Naive thymus-derived CD8-positive, alpha-beta T cell (primary cell): ENCODE measurements at regions of chr9 and their contacts with region 1.

Region 1: GRCh38 chr9:137578518-137579258 is at the start of gene DPH7:
- DNase-seq: peak; percentile 85 to 99 (median 92)
- ATAC-seq: peak; percentile 98 to 99
- H3K4me3 Mint-ChIP-seq: peak within 1 kb of the TSS; percentile 72 to 88 (median 82)
- H3K27ac Mint-ChIP-seq: peak within 1 kb of the TSS in 9 of 10 donors; percentile 13 to 87 (median 80)
- H3K4me1 Mint-ChIP-seq: peaks cover 20 to 39% (median 33%) of the 10 kb centered on the region in 4 donors
- H3K27me3 Mint-ChIP-seq: no peaks in the 10 kb centered on the region
- polyA plus RNA-seq, gene DPH7: 26.2 to 32.8 (median 29.8) TPM

Region 2: DNA sequence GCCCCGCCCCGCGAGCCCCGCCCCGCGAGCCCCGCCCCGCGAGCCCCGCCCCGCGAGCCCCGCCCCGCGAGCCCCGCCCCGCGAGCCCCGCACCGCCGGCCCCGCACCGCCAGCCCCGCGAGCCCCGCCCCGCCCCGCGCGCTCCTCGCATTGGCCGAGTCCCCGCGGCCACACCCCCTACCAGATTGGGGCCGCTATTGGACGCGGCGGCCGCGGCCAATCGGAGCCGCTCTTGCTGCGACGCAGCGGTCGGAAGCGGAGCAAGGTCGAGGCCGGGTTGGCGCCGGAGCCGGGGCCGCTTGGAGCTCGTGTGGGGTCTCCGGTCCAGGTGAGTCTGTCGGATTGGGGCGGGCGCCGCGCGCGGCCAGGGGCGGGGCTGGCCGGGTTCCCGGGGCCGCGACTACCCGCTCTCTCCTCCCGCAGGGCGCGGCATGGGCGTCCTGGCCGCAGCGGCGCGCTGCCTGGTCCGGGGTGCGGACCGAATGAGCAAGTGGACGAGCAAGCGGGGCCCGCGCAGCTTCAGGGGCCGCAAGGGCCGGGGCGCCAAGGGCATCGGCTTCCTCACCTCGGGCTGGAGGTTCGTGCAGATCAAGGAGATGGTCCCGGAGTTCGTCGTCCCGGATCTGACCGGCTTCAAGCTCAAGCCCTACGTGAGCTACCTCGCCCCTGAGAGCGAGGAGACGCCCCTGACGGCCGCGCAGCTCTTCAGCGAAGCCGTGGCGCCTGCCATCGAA is 26.9 kb before region 1 on chr9 and contains the start of gene MRPL41:
- POLR2A ChIA-PET with region 1: interaction called, 12 read pairs
- DNase-seq: peak; percentile 75 to 95 (median 82)
- ATAC-seq: peak; percentile 84 to 85
- H3K4me3 Mint-ChIP-seq: peak within 1 kb of the TSS; percentile 77 to 96 (median 88)
- H3K27ac Mint-ChIP-seq: peak within 1 kb of the TSS in 9 of 10 donors; percentile 78 to 92 (median 86)
- H3K4me1 Mint-ChIP-seq: peaks cover 7 to 32% (median 21%) of the 10 kb centered on the region in 4 donors
- H3K27me3 Mint-ChIP-seq: no peaks in the 10 kb centered on the region
- polyA plus RNA-seq, gene MRPL41: 36.7 to 46.5 (median 43.0) TPM

Region 3: DNA sequence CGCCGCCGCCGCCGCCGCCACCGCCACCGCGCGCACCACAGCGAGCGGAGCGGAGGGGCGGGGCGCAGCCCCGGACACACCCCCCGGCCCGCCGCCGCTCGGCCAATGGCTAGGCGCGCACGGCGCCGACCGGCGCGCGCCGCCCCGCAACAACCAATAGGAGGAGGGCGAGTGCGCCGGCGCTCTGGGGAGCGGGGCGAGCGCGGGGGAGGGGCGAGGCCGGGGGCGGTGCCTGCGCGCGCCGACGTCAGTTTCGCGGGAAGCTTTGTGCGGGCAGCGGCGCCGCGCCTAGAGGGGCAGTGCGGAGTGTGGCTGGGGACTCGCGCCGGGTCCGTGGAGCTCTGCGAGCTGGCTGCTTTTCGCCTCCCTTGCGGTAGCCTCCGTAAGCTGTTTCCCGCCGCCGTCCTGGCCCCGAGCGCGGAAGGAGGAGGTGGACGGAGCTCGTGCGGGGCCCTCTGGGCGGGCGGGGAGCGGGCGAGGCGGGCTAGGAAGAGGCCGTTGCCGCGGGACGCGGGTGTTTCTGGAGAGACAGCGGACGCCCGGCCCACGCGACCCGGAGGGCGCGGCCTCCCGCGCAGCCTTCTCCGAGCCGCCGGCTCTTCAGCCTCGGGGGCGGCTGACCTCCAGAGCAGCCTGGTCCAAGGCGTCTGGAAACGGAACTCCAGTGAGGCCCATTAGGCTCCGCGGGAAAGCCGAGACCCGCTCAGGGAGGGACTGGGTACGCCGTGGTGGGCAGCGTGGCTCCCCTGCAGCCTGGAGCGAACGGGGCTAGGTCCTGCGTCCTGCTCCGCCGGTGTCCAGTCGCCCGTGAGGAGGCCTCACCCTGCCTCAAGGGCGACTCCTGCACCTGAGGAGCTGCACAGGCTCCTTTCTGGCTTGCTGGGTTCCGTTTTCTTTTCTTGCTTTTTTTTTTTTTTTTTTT is 12.0 kb after region 1 on chr9 and contains the start of gene ZMYND19:
- POLR2A ChIA-PET with region 1: interaction called, 10 read pairs
- DNase-seq: peak; percentile 83 to 96 (median 90)
- ATAC-seq: peak; percentile 95 to 97
- H3K4me3 Mint-ChIP-seq: peak within 1 kb of the TSS; percentile 91 to 97 (median 94)
- H3K27ac Mint-ChIP-seq: peak within 1 kb of the TSS in 9 of 10 donors; percentile 79 to 94 (median 92)
- H3K4me1 Mint-ChIP-seq: peaks cover 8 to 26% (median 12%) of the 10 kb centered on the region in 4 donors
- H3K27me3 Mint-ChIP-seq: no peaks in the 10 kb centered on the region
- polyA plus RNA-seq, gene ZMYND19: 5.5 to 15.7 (median 7.7) TPM